Adrenal gland (tissue), 19 donors: ENCODE measurements at regions of chr7 and their contacts with region 1.

Region 1: GRCh38 chr7:98841179-98841997 is 28.4 kb downstream of the TMEM130 start:
- DNase-seq: peak; percentile 79 to 92 (median 89)
- H3K4me3 ChIP-seq: no peak overlapping the region
- H3K27ac ChIP-seq: peak overlapping the region; percentile 56 to 87 (median 77)
- H3K4me1 ChIP-seq: peaks cover 3 to 8% of the 10 kb centered on the region in 2 donors
- H3K27me3 ChIP-seq: no peaks in the 10 kb centered on the region
- CTCF ChIP-seq: peak; percentile 90 to 99 (median 98)
- POLR2A ChIP-seq: peak in 1 of 2 donors; percentile 36

Region 2: DNA sequence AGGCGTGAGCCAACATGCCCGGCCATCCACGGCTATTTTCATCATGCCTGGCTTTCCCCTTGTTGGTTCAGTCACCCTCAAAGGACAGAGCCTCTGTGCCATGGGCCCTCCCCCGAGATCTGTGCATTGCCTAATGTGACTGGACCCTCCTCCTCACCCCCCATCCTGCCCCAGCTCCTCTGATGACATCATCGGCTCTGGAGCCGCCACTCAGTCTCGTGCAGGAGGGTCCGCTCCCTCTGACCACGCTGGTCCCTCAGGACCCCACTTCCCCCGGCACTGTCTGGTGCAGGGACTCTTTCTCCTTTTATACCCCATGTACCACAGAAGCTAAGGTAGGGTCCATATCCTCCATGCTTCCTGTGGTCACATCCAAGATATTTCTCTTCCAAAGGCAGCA is 407.3 kb before region 1 on chr7:
- intact Hi-C with region 1: loop called (anchors 2 to 5 kb)
- DNase-seq: no peak
- H3K4me3 ChIP-seq: no peak overlapping the region
- H3K27ac ChIP-seq: no peak overlapping the region
- H3K4me1 ChIP-seq: no peaks in the 10 kb centered on the region
- H3K27me3 ChIP-seq: no peaks in the 10 kb centered on the region
- CTCF ChIP-seq: no peak
- POLR2A ChIP-seq: no peak

Region 3: GRCh38 chr7:98439484-98439883 is 401.9 kb before region 1 on chr7:
- intact Hi-C with region 1: loop called in 1 of 2 experiments (anchors 5 kb)
- DNase-seq: no peak
- H3K4me3 ChIP-seq: no peak overlapping the region
- H3K27ac ChIP-seq: no peak overlapping the region
- H3K4me1 ChIP-seq: no peaks in the 10 kb centered on the region
- H3K27me3 ChIP-seq: no peaks in the 10 kb centered on the region
- CTCF ChIP-seq: no peak
- POLR2A ChIP-seq: no peak

Region 4: DNA sequence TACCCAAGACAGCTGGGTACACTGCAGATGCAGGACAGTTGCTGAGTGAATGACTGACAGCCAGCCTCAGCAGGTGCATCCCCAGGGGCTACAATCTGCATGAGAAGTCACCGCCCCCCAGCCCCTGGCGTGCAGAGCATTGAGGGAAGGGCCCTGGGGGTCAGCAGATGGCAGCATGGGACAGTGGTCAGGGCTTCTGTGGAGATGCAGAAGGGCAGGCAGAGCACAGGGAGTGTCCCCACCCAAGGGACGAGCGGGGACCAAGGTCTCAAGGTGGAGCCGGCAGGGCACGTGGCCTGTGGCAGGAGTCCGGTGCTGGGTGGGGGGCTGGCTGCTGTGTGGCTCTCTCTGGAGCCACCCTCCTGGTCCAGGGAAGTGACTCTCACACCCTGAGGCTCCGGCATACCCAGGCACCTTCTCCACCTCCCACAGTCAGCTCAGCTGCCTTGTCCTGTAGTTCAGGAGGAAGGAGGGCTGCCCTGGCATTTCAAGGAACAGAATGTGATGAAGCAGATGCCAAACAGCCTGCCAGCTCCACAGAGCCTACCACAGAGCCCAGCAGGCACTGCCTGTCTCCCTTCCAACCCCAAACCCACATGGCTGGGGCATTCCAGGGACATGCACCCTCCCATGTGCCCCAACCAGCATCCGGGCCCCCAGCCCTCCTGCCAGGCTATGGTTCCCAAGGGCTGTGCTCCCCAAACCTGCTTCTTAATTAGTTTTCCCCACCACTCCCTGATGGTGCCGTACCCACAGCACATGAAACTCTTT is 86.1 kb before region 1 on chr7:
- intact Hi-C with region 1: loop called in 1 of 2 experiments (anchors 5 kb)
- DNase-seq: peak in 5 of 7 donors; percentile 32 to 58 (median 40)
- H3K4me3 ChIP-seq: no peak overlapping the region
- H3K27ac ChIP-seq: no peak overlapping the region
- H3K4me1 ChIP-seq: no peaks in the 10 kb centered on the region
- H3K27me3 ChIP-seq: no peaks in the 10 kb centered on the region
- CTCF ChIP-seq: peak in 4 of 6 experiments; percentile 22 to 44 (median 38)
- POLR2A ChIP-seq: no peak

Region 5: DNA sequence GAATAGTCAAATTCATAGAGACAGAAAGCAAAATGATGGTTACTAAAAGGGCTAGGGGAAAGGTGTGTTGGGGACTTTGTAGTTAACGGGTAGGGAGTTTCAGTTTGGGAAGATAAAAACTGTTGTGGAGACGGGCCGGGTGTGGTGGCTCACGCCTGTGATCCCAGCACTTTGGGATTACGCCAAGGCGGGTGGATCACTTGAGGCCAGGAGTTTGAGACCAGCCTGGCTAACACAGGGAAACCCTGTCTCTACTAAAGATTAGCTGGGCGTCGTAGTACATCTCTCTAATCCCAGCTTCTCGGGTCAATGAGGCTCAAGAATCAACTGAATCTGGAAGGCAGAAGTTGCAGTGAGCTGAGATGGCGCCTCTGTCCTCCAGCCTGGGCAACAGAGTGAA is 335.8 kb after region 1 on chr7:
- intact Hi-C with region 1: no loop called
- DNase-seq: no peak
- H3K4me3 ChIP-seq: no peak overlapping the region
- H3K27ac ChIP-seq: no peak overlapping the region
- H3K4me1 ChIP-seq: no peaks in the 10 kb centered on the region
- H3K27me3 ChIP-seq: no peaks in the 10 kb centered on the region
- CTCF ChIP-seq: no peak
- POLR2A ChIP-seq: no peak